ENCODE measurements at regions of chr9 and their contacts with region 1.

Region 1: GRCh38 chr9:70419546-70420266 is 5.2 kb upstream of the KLF9 start:
- DNase-seq: peak; percentile 93 to 94 (median 94)
- H3K4me3 ChIP-seq: peak overlapping the region; percentile 40 to 75 (median 54)
- H3K4me3 Mint-ChIP-seq: peak overlapping the region; percentile 92 to 97
- H3K27ac ChIP-seq: peak overlapping the region; percentile 97 to 99
- H3K27ac Mint-ChIP-seq: peak overlapping the region; percentile 99 to 100 (median 100)
- H3K4me1 ChIP-seq: peaks cover 36 to 49% of the 10 kb centered on the region in 2 donors
- H3K4me1 Mint-ChIP-seq: peaks cover 34% of the 10 kb centered on the region
- H3K27me3 ChIP-seq: no peaks in the 10 kb centered on the region
- H3K27me3 Mint-ChIP-seq: peaks cover 0 to 3% (median 2%) of the 10 kb centered on the region in 3 donors
- CTCF ChIP-seq: no peak

Region 2: DNA sequence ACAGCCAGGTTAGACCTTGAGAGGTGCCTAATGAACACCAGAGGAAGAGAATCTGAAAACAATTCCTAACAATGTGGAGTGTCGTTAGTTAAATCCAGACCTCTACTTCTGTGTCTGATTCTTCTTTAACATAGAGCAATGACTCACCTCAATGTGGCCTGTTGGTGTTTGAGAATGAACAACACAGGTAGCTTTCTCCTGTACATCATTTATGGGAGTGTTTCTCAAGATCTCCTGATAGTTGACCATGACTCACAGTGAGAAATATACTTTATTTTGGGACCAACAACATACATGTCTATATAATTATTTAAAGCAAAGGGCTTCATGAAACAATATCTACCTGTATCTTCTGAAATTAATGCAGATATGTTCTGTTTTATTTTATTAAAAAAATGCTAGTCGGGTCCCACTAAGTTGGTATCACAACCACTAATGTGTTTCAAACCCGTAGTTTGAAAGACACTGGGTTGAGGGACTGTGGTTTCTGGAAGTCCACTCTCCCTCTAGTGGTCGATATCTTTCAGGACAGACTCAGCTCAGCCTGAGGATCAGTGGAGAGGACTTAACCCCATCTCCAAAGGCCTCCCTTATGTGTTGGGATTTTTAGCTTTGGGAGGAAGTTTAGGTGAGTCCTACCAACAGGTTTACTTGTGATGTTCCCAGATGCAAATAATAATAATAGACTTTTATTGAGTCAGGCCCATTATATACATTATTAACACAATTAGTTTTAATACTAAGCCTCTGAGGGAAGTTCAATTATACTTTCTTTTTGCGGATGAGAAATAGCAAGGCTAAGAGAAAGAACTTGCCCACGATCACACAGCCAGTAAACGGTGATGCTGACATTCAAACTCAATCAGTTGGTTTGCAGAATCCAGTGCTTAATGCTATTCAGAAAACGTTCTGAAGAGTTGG is 64.8 kb after region 1 on chr9:
- intact Hi-C with region 1: loop called (anchors 5 to 10 kb)
- DNase-seq: peak; percentile 51 to 63 (median 62)
- H3K4me3 ChIP-seq: no peak overlapping the region
- H3K4me3 Mint-ChIP-seq: no peak overlapping the region
- H3K27ac ChIP-seq: no peak overlapping the region
- H3K27ac Mint-ChIP-seq: peak overlapping the region in 2 of 7 donors; percentile 21 to 80
- H3K4me1 ChIP-seq: peaks cover 0 to 7% of the 10 kb centered on the region in 2 donors
- H3K4me1 Mint-ChIP-seq: peaks cover 15% of the 10 kb centered on the region
- H3K27me3 ChIP-seq: no peaks in the 10 kb centered on the region
- H3K27me3 Mint-ChIP-seq: peaks cover 0 to 6% (median 0%) of the 10 kb centered on the region in 3 donors
- CTCF ChIP-seq: peak; percentile 79

Region 3: DNA sequence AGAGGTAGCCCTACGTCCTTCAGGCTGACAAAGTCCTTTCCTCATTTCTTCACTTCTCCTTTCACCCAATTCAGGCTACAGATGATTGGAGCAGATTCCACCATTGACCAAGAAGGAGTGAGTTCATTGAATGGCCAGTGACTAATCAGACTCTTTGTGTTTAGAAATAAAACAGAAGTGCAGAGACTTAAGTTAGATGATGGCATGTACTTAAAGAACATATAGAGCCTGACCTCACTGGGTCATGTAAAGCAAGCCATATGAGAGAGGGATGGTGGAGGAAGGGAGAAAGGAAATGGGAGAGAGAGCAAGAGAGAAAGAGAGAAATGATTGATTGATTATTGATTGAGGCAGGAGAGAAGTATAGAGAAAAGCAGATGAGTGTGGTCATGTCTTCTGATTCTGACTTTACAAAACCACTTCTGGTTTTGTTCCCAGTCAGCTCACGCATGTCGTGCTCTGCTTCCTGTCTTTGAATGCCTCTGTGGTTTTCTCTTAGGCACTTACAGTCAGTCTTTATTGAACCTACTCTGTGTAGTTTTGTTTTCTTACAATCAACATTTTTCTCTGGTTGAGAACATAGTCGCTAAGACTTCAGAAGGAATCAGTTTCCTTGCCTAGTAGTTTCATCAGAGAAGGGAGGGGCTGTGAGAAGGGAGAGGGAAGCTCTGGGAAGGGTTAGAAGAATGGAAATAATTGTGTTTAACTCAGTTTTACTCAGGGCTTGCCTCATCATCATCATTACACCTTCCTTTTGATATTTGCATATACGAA is 143.9 kb after region 1 on chr9:
- intact Hi-C with region 1: loop called in 1 of 2 experiments (anchors 5 kb)
- DNase-seq: peak; percentile 93 to 97 (median 97)
- H3K4me3 ChIP-seq: peak overlapping the region in 1 of 3 experiments; percentile 34
- H3K4me3 Mint-ChIP-seq: peak overlapping the region; percentile 70 to 91
- H3K27ac ChIP-seq: peak overlapping the region; percentile 90 to 98
- H3K27ac Mint-ChIP-seq: peak overlapping the region; percentile 97 to 100 (median 100)
- H3K4me1 ChIP-seq: peaks cover 35 to 36% of the 10 kb centered on the region in 2 donors
- H3K4me1 Mint-ChIP-seq: peaks cover 32% of the 10 kb centered on the region
- H3K27me3 ChIP-seq: no peaks in the 10 kb centered on the region
- H3K27me3 Mint-ChIP-seq: peaks cover 0 to 3% (median 0%) of the 10 kb centered on the region in 3 donors
- CTCF ChIP-seq: no peak

Measured in CD14-positive monocyte (primary cell).